ENCODE measurements at regions of chr20 and their contacts with region 1.

Region 1: DNA sequence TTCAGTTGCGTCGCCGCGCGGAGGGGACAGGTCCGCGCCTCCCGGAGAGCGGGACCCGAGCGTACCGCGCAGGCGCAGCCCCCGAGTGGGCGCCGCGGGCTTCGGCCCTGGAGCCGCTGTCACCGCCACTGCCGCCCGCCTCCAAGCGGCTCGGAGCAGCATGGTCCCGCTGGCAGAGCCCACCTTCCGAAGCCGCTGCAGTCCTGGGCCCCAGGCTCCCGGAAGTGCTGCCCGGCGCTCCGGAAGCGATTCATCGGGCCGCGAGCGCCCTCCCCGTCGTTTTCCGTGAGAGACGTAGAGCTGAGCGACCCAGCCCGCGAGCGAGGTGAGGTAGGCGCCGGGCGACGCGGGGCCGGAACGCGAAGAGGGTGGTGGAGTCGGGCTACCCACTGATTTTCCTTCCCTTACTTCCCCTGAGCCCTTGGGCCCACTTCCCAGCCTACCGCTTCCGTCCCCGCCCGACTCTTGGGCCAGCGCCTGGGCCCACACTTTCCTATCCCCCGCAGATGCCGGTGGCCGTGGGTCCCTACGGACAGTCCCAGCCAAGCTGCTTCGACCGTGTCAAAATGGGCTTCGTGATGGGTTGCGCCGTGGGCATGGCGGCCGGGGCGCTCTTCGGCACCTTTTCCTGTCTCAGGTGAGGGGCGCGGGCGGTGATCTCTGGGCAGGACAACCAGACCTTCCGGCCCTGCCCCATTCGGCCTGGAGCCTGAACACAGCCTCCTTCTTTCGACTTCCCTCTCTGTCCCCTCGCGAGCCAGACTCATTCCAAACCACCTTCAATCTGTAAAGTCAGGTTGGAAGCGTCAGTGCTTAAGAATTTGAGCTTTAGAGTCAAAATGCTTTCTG is at the starts of genes NFS1 and ROMO1:
- DNase-seq: peak; percentile 88
- ATAC-seq: peak; percentile 91
- H3K4me3 Mint-ChIP-seq: peak within 1 kb of the TSS; percentile 93
- H3K27ac Mint-ChIP-seq: peak within 1 kb of the TSS; percentile 92
- H3K4me1 Mint-ChIP-seq: peaks cover 26% of the 10 kb centered on the region
- H3K27me3 Mint-ChIP-seq: no peaks in the 10 kb centered on the region
- total RNA-seq, gene NFS1: 33.1 to 33.8 TPM
- total RNA-seq, gene ROMO1: 96.9 to 112 TPM

Region 2: GRCh38 chr20:35711588-35712209 is 12.3 kb after region 1 on chr20:
- POLR2A ChIA-PET with region 1: interaction called, 14 read pairs
- DNase-seq: no peak
- ATAC-seq: peak; percentile 43
- H3K4me3 Mint-ChIP-seq: peak overlapping the region; percentile 66
- H3K27ac Mint-ChIP-seq: peak overlapping the region; percentile 65
- H3K4me1 Mint-ChIP-seq: peaks cover 39% of the 10 kb centered on the region
- H3K27me3 Mint-ChIP-seq: no peaks in the 10 kb centered on the region

Measured in activated naive CD8-positive, alpha-beta T cell treated with anti-CD3 and anti-CD28 coated beads, Interleukin-2, amount 10 ng/mL, durations not matched to agents 7 days and 5 days (primary cell).